Activated CD4-positive, alpha-beta T cell treated with anti-CD3 and anti-CD28 coated beads for 36 hours (primary cell): ENCODE measurements at regions of chr11 and their contacts with region 1.

Region 1: GRCh38 chr11:3220521-3221407 is 2.2 kb upstream of the MRGPRG start:
- DNase-seq: no peak
- ATAC-seq: no peak
- H3K4me3 Mint-ChIP-seq: no peak overlapping the region
- H3K27ac Mint-ChIP-seq: no peak overlapping the region
- H3K4me1 Mint-ChIP-seq: peaks cover 12% of the 10 kb centered on the region
- H3K27me3 Mint-ChIP-seq: peaks cover 4% of the 10 kb centered on the region

Region 2: GRCh38 chr11:3037040-3037944 is 183.5 kb before region 1 on chr11:
- CTCF ChIA-PET with region 1: interaction called, 4 read pairs
- POLR2A ChIA-PET with region 1: no interaction called
- intact Hi-C with region 1: loop called in 1 of 2 experiments (anchors 5 kb)
- DNase-seq: peak; percentile 71
- ATAC-seq: peak; percentile 87
- H3K4me3 Mint-ChIP-seq: no peak overlapping the region
- H3K27ac Mint-ChIP-seq: no peak overlapping the region
- H3K4me1 Mint-ChIP-seq: peaks cover 23% of the 10 kb centered on the region
- H3K27me3 Mint-ChIP-seq: no peaks in the 10 kb centered on the region

Region 3: DNA sequence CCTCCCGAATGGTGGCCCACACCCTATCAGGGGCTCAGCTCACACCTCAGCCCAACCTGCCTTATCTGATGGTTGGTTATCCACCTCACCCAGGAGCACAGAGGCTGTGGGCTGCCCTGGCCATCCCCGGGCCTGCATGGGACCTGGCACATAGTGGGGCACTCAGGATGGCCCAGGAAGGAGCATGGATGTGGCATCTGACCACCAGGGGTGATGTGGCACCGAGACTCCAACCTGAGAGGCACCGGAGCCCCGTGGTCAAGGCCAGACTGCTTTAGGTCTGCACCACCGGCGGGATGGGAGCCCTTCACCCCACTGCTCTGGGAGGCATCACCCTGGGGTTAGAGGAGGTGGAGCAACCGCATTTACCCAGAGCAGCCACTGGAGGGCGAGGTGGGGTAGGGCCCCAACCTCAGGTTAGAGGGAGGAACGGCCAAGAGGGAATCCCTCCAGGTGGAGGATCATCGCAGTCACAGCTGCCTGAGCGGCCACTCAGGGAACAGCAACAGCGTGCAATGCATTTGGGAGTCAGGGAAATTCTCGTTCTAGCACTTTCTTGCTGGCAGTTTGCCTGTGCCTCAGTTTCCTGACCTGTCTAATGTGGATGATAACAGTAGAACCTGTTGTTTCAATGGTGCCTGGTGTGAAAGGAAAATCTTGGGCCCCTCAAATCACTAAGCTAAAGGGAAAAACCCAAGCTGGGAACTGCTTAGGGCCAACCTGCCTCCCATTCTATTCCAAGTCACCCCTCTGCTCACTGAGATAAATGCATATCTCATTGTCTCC is 110.7 kb before region 1 on chr11:
- CTCF ChIA-PET with region 1: interaction called, 10 read pairs
- POLR2A ChIA-PET with region 1: no interaction called
- intact Hi-C with region 1: loop called (anchors 1 kb)
- DNase-seq: peak; percentile 74
- ATAC-seq: peak; percentile 92
- H3K4me3 Mint-ChIP-seq: no peak overlapping the region
- H3K27ac Mint-ChIP-seq: no peak overlapping the region
- H3K4me1 Mint-ChIP-seq: no peaks in the 10 kb centered on the region
- H3K27me3 Mint-ChIP-seq: no peaks in the 10 kb centered on the region

Region 4: DNA sequence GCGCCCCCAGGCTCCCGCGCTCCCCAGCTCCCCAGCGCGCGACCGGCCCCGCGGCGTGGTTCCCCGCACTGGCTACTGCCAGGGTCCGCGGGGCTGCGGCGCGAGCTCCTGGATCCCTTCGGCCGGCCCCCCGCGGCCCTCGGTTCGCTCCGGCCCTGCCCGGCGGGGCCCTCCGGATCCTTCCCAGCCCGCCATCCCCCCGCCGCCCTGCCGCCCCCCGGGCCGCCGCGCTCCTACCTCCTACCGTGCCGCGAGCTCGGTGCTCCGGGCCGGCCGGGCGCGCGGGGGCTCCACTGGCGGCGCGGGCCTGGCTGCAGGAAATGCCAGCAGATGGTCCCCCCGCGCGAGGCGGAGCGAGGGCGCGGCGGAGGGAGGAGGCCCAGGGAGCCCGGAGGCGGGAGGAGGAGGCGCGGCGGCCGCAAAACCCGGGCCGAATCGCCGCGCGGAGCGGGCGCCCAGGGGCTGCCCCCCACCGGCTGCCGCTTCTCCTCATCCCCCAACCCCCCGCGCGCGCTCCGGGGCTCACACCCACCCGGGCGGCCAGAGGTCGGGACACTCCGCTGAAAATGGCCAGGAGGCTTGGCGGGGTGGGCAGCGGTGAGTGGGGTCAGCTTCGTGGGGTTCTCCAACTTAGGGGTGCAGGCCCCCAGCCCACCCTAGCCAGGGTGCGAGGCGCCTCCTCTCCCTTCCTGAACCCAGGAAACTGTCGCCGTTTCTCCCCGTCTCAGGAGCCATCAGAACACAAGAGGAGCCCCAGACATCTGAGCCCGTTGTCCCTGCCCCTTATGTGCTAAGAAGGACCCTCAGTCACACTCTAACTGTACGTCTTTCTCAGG is 55.6 kb before region 1 on chr11 and contains the start of gene OSBPL5:
- CTCF ChIA-PET with region 1: interaction called, 3 read pairs
- POLR2A ChIA-PET with region 1: no interaction called
- intact Hi-C with region 1: loop called in 1 of 2 experiments (anchors 5 kb)
- DNase-seq: peak; percentile 77
- ATAC-seq: peak; percentile 43
- H3K4me3 Mint-ChIP-seq: peak within 1 kb of the TSS; percentile 67
- H3K27ac Mint-ChIP-seq: no peak within 1 kb of the TSS
- H3K4me1 Mint-ChIP-seq: peaks cover 33% of the 10 kb centered on the region
- H3K27me3 Mint-ChIP-seq: peaks cover 23% of the 10 kb centered on the region
- total RNA-seq, gene OSBPL5: 5.8 to 7.1 TPM

Region 5: GRCh38 chr11:3245071-3245470 is 24.3 kb after region 1 on chr11:
- CTCF ChIA-PET with region 1: no interaction called
- POLR2A ChIA-PET with region 1: no interaction called
- intact Hi-C with region 1: no loop called
- DNase-seq: no peak
- ATAC-seq: no peak
- H3K4me3 Mint-ChIP-seq: no peak overlapping the region
- H3K27ac Mint-ChIP-seq: no peak overlapping the region
- H3K4me1 Mint-ChIP-seq: no peaks in the 10 kb centered on the region
- H3K27me3 Mint-ChIP-seq: peaks cover 4% of the 10 kb centered on the region